ENCODE measurements at regions of chr5 and their contacts with region 1.

Region 1: DNA sequence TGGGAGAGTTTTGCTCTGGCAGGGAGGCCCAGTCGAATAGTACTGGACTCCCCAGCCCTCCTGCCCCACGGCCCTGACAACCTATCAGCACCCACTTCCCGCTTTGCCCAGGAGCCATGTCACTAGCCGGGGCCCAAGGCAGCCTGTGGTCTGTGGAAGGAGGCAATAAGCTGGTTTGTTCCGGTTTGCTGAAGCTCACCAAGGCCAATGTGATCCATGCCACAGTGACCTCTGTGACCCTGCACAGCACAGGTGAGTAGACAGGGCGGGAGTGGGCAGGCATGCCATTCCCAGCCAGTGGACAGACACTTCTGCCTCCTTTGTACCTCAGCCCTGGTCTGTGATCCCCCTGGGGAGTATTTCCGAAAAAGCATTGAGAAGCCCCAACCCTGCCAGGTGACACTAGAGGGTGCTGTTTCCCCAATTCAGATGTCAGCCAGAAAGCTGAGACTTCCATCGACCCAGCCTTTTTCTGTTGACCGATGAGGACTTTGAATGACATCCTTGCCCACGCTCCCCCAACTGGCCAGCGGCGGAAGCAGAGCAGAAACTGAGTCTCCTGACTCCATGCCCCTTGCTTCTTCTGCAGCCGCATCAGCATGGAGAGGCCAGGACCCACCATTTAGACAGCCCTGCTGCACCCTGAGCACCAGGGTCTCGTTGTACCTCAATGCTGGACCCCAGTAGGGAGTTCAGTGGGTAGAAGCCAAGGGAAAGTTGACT is 9.6 kb downstream of the PCYOX1L start:
- DNase-seq: peak; percentile 84
- CTCF ChIP-seq: peak; percentile 82

Region 2: GRCh38 chr5:149141224-149141956 is 226.0 kb before region 1 on chr5 and contains the start of gene ABLIM3:
- CTCF ChIA-PET with region 1: no interaction called
- POLR2A ChIA-PET with region 1: no interaction called
- DNase-seq: peak; percentile 84
- CTCF ChIP-seq: peak; percentile 87

Region 3: GRCh38 chr5:149273935-149274334 is 93.5 kb before region 1 on chr5:
- CTCF ChIA-PET with region 1: no interaction called
- POLR2A ChIA-PET with region 1: no interaction called
- DNase-seq: no peak
- CTCF ChIP-seq: no peak

Region 4: GRCh38 chr5:149317281-149318048 is 49.9 kb before region 1 on chr5:
- CTCF ChIA-PET with region 1: interaction called, 152 read pairs
- POLR2A ChIA-PET with region 1: no interaction called
- DNase-seq: peak; percentile 75
- CTCF ChIP-seq: peak; percentile 74

Region 5: DNA sequence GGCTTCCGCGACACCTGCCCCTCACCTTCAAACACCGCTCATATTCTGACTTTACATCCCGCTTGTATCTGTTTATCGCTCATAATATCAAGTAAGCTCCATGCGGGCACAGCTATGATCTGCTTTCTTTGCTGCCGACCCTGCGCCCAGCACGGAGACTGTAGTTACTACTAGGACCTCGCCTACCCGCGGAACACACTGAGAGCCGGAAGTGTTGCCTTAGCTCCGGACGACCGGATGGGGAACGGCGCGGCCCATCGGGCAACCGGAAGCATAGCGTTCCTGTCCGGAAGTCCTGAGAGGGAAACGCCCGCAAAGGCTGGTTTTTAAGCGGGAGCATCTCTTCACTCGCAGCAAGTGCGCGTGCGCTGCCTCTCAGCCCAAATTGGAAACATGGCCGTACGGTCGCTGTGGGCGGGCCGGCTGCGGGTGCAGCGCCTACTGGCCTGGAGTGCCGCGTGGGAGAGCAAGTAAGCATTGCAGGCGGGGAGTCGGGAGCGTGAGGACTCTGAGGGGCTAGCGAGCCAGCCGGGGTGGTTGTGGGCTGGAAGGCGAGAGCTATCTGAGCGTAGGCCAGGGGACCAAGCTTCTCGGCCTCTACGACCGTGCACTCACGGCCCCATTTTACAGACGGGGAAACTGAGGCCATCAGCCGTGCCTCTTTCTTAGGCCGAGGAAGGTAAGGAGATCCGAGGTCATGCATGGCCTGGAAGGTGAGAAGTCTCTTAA is 22.1 kb before region 1 on chr5 and contains the start of gene GRPEL2:
- CTCF ChIA-PET with region 1: interaction called, 50 read pairs
- POLR2A ChIA-PET with region 1: interaction called, 3 read pairs
- DNase-seq: peak; percentile 96
- CTCF ChIP-seq: no peak

Region 6: DNA sequence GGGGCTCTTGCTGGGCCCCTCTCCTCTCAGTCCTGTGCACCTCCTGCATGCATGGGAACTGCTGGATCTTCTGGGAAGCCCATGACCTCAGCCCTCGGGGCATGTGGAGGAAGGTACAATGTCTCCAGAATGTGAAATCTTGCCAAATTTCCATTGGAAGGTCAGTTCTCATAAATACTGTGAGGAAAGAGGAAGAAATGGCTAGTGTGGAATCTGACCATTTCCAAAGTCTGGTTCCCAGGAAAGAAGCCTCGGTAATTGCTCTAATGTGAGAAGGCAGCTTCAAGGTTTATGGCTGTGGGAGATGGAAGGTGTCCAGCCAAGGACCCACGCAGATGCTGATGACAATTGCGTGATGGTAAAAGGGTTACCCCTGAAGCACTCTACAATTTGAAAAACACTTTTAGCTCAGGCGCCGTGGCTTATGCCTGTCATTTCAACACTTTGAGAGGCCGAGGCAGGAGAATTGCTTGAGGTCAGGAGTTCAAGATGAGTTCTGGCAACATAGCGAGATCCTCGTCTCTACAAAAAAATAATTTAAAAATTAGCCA is 19.7 kb after region 1 on chr5:
- CTCF ChIA-PET with region 1: interaction called, 81 read pairs
- POLR2A ChIA-PET with region 1: no interaction called
- DNase-seq: no peak
- CTCF ChIP-seq: no peak

Region 7: DNA sequence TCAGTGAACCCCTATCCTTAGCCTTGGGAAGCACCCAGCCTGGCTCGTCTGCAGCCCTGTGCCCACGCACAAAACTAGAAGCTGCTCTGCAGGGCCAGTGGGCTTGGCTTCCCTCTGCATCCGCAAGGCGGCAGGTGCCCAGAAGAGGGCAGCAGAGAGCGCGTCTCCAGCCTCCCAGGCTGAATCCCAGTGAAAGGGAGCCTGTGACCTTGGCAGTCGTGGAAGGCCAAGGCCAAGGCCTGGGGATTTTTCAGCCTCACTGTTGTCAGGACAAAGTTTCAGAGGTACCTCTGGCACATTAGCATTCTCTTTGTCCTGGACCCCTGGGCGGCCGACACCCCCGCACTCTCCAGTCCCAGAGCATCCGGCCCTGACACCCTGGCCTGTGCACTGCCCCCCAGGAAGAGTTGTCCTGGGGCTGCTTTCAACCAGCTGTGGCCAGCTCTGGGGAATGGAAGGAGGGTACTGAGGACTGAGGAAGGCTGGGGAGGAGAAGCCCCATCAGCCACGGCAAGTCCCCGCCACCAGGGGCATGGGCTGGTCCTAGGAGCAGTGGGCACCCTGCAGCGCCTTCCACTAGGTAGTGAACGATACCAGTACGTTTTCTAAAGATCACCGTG is 75.3 kb after region 1 on chr5:
- CTCF ChIA-PET with region 1: interaction called, 12 read pairs
- POLR2A ChIA-PET with region 1: no interaction called
- DNase-seq: peak; percentile 87
- CTCF ChIP-seq: peak; percentile 96

Region 8: DNA sequence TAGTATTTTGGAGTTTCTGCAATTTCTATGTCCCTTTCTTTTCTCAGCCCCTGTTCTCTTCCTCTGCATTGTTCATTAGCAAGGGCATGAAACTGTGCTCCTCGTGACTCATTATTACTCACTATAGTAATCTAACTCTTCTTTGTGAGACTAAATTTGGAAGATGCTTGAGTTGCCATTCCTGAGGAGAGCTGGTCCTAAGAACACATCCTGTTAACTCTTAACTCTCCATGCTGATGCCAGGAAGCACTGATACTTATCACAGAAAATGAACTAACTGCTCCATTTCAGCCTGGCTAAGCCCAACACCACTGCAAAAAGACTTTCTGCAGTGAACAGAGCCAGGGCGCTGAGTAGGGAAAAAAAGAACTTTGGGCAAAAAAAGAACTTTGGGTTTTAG is 194.4 kb after region 1 on chr5:
- CTCF ChIA-PET with region 1: interaction called, 23 read pairs
- POLR2A ChIA-PET with region 1: no interaction called
- DNase-seq: no peak
- CTCF ChIP-seq: no peak